Endothelial cell of umbilical vein (primary cell): ENCODE measurements at regions of chr18 and their contacts with region 1.

Region 1: GRCh38 chr18:45802608-45803492 is 22.6 kb upstream of the SIGLEC15 start:
- DNase-seq: peak; percentile 94
- H3K4me3 ChIP-seq: no peak overlapping the region
- H3K27ac ChIP-seq: peak overlapping the region; percentile 88
- H3K4me1 ChIP-seq: peaks cover 26% of the 10 kb centered on the region
- H3K27me3 ChIP-seq: no peaks in the 10 kb centered on the region
- CTCF ChIP-seq: no peak
- POLR2A ChIP-seq: no peak

Region 2: GRCh38 chr18:45467293-45467692 is 335.6 kb before region 1 on chr18:
- CTCF ChIA-PET with region 1: no interaction called
- POLR2A ChIA-PET with region 1: no interaction called
- dilution Hi-C with region 1: no loop called
- intact Hi-C with region 1: no loop called
- DNase-seq: peak; percentile 5
- H3K4me3 ChIP-seq: no peak overlapping the region
- H3K27ac ChIP-seq: no peak overlapping the region
- H3K4me1 ChIP-seq: no peaks in the 10 kb centered on the region
- H3K27me3 ChIP-seq: no peaks in the 10 kb centered on the region
- CTCF ChIP-seq: no peak
- POLR2A ChIP-seq: no peak

Region 3: GRCh38 chr18:45589356-45590035 is 213.4 kb before region 1 on chr18:
- CTCF ChIA-PET with region 1: no interaction called
- POLR2A ChIA-PET with region 1: no interaction called
- dilution Hi-C with region 1: no loop called
- intact Hi-C with region 1: no loop called
- DNase-seq: no peak
- H3K4me3 ChIP-seq: no peak overlapping the region
- H3K27ac ChIP-seq: no peak overlapping the region
- H3K4me1 ChIP-seq: no peaks in the 10 kb centered on the region
- H3K27me3 ChIP-seq: no peaks in the 10 kb centered on the region
- CTCF ChIP-seq: no peak
- POLR2A ChIP-seq: no peak

Region 4: GRCh38 chr18:45755934-45756333 is 46.9 kb before region 1 on chr18:
- CTCF ChIA-PET with region 1: interaction called, 7 read pairs
- POLR2A ChIA-PET with region 1: no interaction called
- dilution Hi-C with region 1: no loop called
- intact Hi-C with region 1: loop called (anchors 1 kb)
- DNase-seq: peak; percentile 99
- H3K4me3 ChIP-seq: no peak overlapping the region
- H3K27ac ChIP-seq: no peak overlapping the region
- H3K4me1 ChIP-seq: peaks cover 26% of the 10 kb centered on the region
- H3K27me3 ChIP-seq: peaks cover 15 to 32% of the 10 kb centered on the region in 2 experiments
- CTCF ChIP-seq: no peak
- POLR2A ChIP-seq: no peak

Region 5: DNA sequence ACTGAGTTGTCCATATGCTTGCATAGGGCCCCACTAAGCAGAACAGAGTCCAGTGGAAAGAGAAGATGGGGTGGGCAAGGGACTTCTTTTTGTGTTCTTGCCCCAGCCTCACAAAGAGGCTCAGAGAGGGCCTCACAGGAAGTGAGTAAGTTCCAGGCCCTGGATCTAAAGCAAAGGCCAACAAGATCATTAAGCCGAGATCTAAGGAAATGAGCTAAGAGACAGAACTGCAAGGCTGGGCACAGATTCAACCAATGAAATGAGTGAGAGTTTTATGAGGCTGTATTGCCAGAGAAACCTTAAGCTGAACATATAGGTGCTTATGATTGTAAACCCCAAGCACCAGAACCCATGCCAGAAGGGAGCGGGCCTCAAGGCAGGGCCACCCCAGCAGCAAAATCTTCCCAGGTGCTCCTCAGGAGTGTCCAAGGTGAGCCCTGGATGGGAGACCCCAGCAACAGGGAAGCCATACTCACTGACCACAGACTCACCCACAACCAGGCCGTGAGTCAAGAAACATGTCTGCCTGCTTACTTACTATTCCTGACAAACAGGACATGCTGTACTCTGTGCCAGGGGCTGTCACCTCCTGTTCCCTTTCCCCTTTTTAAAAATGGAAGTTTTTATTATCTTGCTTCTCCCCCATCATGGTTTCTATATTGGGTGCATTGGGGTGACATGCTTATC is 38.7 kb before region 1 on chr18:
- CTCF ChIA-PET with region 1: interaction called, 3 read pairs
- POLR2A ChIA-PET with region 1: interaction called, 3 read pairs
- dilution Hi-C with region 1: no loop called
- intact Hi-C with region 1: loop called (anchors 1 kb)
- DNase-seq: peak; percentile 80
- H3K4me3 ChIP-seq: no peak overlapping the region
- H3K27ac ChIP-seq: peak overlapping the region; percentile 80
- H3K4me1 ChIP-seq: peaks cover 27% of the 10 kb centered on the region
- H3K27me3 ChIP-seq: peaks cover 0 to 5% of the 10 kb centered on the region in 2 experiments
- CTCF ChIP-seq: no peak
- POLR2A ChIP-seq: peak; percentile 21